K562 (cell line): ENCODE measurements at regions of chr16 and their contacts with region 1.

Region 1: GRCh38 chr16:11201498-11202259 is 54.3 kb downstream of the SOCS1 start:
- DNase-seq: peak; percentile 80 to 90 (median 84)
- ATAC-seq: peak; percentile 84
- H3K4me3 ChIP-seq: no peak overlapping the region
- H3K27ac ChIP-seq: peak overlapping the region; percentile 76
- H3K4me1 ChIP-seq: peaks cover 39 to 63% of the 10 kb centered on the region in 2 experiments
- H3K27me3 ChIP-seq: no peaks in the 10 kb centered on the region
- CTCF ChIP-seq: no peak
- EP300 ChIP-seq: peak; percentile 83
- POLR2A ChIP-seq: 0 out of 2 replicates have a peak, but pooled peaks have one; percentile 31
- RAD21 ChIP-seq: peak in 1 of 2 experiments; percentile 12; a peak in 1 of 4 replicates

Region 2: GRCh38 chr16:11133344-11133943 is 68.2 kb before region 1 on chr16:
- CTCF ChIA-PET with region 1: no interaction called
- POLR2A ChIA-PET with region 1: interaction called, 3 read pairs
- in situ Hi-C with region 1: no loop called
- intact Hi-C with region 1: loop called (anchors 5 kb)
- DNase-seq: peak; percentile 69 to 90 (median 75)
- ATAC-seq: peak; percentile 50
- H3K4me3 ChIP-seq: no peak overlapping the region
- H3K27ac ChIP-seq: peak overlapping the region; percentile 22; the same call in 1 of the 3 replicates
- H3K4me1 ChIP-seq: peaks cover 42 to 54% of the 10 kb centered on the region in 2 experiments
- H3K27me3 ChIP-seq: no peaks in the 10 kb centered on the region
- CTCF ChIP-seq: no peak
- EP300 ChIP-seq: peak; percentile 39; the same call in 1 of the 2 replicates
- POLR2A ChIP-seq: no peak
- RAD21 ChIP-seq: peak in 1 of 2 experiments; percentile 15; a peak in 1 of 4 replicates

Region 3: GRCh38 chr16:11188801-11189740 is 12.6 kb before region 1 on chr16:
- CTCF ChIA-PET with region 1: no interaction called
- POLR2A ChIA-PET with region 1: interaction called, 10 read pairs
- in situ Hi-C with region 1: no loop called
- intact Hi-C with region 1: no loop called
- DNase-seq: no peak
- ATAC-seq: no peak
- H3K4me3 ChIP-seq: no peak overlapping the region
- H3K27ac ChIP-seq: no peak overlapping the region
- H3K4me1 ChIP-seq: peaks cover 0 to 5% of the 10 kb centered on the region in 2 experiments; a peak in 1 of 5 replicates
- H3K27me3 ChIP-seq: no peaks in the 10 kb centered on the region; a peak in 1 of 5 replicates
- CTCF ChIP-seq: no peak
- EP300 ChIP-seq: no peak
- POLR2A ChIP-seq: no peak
- RAD21 ChIP-seq: no peak

Region 4: GRCh38 chr16:11470676-11471415 is 269.2 kb after region 1 on chr16:
- CTCF ChIA-PET with region 1: no interaction called
- POLR2A ChIA-PET with region 1: no interaction called
- in situ Hi-C with region 1: no loop called
- intact Hi-C with region 1: no loop called
- DNase-seq: no peak
- ATAC-seq: peak; percentile 42; the same call in 2 of the 3 replicates
- H3K4me3 ChIP-seq: no peak overlapping the region
- H3K27ac ChIP-seq: no peak overlapping the region
- H3K4me1 ChIP-seq: peaks cover 0 to 4% of the 10 kb centered on the region in 2 experiments; a peak in 2 of 5 replicates
- H3K27me3 ChIP-seq: peaks cover 8 to 27% of the 10 kb centered on the region in 2 experiments; a peak in 3 of 5 replicates
- CTCF ChIP-seq: no peak
- EP300 ChIP-seq: no peak
- POLR2A ChIP-seq: no peak
- RAD21 ChIP-seq: no peak